ENCODE measurements at regions of chr3 and their contacts with region 1.

Region 1: GRCh38 chr3:156382458-156383346 is 172.2 kb downstream of the SSR3 start:
- DNase-seq: peak; percentile 49
- H3K4me3 ChIP-seq: no peak overlapping the region
- H3K27ac ChIP-seq: no peak overlapping the region
- H3K4me1 ChIP-seq: no peaks in the 10 kb centered on the region
- H3K27me3 ChIP-seq: no peaks in the 10 kb centered on the region
- CTCF ChIP-seq: peak; percentile 76 to 84
- POLR2A ChIP-seq: no peak

Region 2: GRCh38 chr3:156181323-156181908 is 201.3 kb before region 1 on chr3:
- CTCF ChIA-PET with region 1: interaction called, 424 read pairs
- POLR2A ChIA-PET with region 1: no interaction called
- dilution Hi-C with region 1: no loop called
- intact Hi-C with region 1: no loop called
- DNase-seq: no peak
- H3K4me3 ChIP-seq: no peak overlapping the region
- H3K27ac ChIP-seq: no peak overlapping the region
- H3K4me1 ChIP-seq: no peaks in the 10 kb centered on the region
- H3K27me3 ChIP-seq: no peaks in the 10 kb centered on the region
- CTCF ChIP-seq: no peak
- POLR2A ChIP-seq: no peak

Region 3: DNA sequence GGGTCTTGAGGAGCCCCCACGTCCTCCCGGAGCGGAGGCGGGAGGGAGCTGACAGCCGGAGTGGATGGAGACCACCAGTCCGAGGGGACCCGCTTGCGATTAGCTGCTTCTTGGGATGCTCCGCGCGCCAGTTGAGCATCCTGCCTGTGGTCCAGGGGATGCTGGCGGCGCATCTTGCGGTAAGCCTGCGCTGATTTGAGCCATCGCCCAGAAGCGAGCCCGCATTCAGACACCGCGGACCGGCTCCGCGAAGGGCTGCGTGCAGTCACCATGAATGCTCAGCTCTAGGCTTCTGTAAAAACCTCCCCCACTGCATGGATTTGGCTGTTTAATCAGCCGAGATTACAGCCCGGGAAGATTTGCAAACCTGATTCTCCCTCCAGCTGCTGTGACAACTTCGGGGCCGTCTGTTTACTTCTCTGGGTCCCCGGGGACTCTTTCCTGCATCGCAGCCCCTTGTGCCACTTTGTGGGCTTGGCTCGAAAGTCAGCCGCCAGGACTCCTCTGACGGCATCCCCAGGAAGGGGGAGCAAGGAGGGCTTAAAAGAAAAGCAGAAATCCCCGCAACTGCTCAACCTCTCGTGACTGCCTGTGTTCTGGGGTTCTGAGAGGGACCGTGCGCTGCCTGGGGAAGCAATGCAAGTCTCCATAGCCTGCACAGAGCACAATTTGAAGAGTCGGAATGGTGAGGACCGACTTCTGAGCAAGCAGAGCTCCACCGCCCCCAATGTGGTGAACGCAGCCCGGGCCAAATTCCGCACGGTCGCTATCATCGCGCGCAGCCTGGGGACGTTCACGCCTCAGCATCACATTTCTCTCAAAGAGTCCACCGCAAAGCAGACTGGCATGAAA is 91.2 kb before region 1 on chr3:
- CTCF ChIA-PET with region 1: interaction called, 11 read pairs
- POLR2A ChIA-PET with region 1: no interaction called
- dilution Hi-C with region 1: no loop called
- intact Hi-C with region 1: no loop called
- DNase-seq: no peak
- H3K4me3 ChIP-seq: peak overlapping the region; percentile 12 to 21 (median 14)
- H3K27ac ChIP-seq: no peak overlapping the region
- H3K4me1 ChIP-seq: peaks cover 6% of the 10 kb centered on the region
- H3K27me3 ChIP-seq: peaks cover 8 to 16% of the 10 kb centered on the region in 2 experiments
- CTCF ChIP-seq: no peak
- POLR2A ChIP-seq: no peak

Region 4: DNA sequence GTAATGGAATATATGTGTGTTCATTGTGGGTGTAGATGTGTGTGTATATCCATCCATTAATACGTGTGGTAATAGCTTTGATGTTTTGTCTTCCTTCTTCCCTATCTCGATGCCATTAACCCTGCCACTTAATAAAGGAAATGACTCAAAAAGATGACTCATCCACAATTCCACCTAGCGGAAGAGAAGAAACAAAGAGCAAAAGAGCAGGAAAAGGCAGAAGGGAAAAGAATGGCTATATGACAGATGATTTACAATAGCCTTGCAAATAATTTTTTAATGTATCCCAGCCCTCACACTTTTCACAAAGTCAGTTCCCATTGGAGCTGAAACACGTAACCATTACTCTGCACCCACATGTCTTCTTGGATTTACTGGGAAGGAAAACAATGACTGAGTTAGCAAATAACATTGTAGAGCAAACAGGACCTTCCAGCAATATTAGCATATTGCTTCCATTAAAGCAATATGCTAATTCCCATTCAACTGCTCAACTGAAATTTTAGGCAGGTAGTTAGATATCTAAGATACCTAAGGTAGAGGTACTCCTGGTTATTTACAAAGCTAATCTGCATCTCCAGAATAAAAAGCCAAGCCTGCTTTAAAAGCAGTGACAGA is 65.1 kb before region 1 on chr3:
- CTCF ChIA-PET with region 1: interaction called, 18 read pairs
- POLR2A ChIA-PET with region 1: no interaction called
- dilution Hi-C with region 1: no loop called
- intact Hi-C with region 1: no loop called
- DNase-seq: peak; percentile 96
- H3K4me3 ChIP-seq: no peak overlapping the region
- H3K27ac ChIP-seq: peak overlapping the region; percentile 72
- H3K4me1 ChIP-seq: peaks cover 24% of the 10 kb centered on the region
- H3K27me3 ChIP-seq: no peaks in the 10 kb centered on the region
- CTCF ChIP-seq: no peak
- POLR2A ChIP-seq: no peak

Region 5: DNA sequence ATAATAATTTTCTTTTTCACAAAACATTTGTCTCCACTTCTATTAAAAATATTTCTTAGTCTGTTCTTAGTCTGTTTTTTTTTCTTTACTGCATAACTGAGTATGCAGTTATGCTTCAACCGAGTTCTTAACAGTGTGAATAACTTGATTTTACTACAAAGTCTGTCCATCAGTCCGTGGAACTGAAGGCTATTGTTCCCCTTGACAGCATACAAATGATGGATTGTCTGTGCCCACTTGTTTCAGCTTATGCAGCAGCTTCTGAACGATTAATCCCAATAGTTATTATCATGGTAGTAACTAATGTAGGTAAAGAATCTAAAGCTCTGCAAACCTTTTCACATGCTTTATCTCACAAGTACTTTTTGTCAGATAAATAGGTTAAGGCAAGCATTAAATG is 21.5 kb after region 1 on chr3:
- CTCF ChIA-PET with region 1: interaction called, 12 read pairs
- POLR2A ChIA-PET with region 1: no interaction called
- dilution Hi-C with region 1: no loop called
- intact Hi-C with region 1: no loop called
- DNase-seq: peak; percentile 4
- H3K4me3 ChIP-seq: no peak overlapping the region
- H3K27ac ChIP-seq: no peak overlapping the region
- H3K4me1 ChIP-seq: no peaks in the 10 kb centered on the region
- H3K27me3 ChIP-seq: no peaks in the 10 kb centered on the region
- CTCF ChIP-seq: no peak
- POLR2A ChIP-seq: no peak

Region 6: DNA sequence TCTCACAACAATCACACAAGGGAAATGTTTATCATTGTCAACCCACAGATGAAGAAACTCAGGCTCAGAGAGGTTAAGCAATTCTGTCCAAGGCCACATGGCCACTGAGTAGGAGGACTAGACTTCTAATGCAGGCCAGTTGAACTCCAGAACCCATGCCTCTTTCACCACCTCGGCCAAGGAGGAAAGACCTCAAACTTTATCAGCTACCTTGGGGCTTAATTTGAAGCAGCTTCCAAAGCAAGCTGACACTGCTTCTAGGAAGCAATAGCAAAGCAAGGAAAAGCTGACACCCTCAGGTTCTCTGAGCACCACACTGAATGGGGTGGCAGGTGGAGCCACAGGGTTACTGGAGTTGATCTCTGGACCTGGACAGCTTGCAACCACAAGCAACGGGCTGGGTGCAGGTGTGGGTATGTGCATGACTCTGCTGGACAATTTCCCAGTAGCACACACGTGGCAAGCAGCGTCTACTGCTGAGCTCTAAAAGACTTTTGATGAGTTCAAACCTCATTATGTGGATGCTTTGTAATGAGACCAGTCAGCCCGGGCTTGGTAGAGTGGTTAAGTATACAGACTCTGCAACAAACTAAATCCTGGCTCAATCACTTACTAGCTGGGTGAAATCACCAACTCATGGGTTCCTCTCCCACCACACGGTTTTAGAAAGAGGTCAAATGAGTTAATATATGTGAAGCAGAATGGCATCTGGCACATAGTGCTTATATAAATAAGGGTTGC is 754.1 kb after region 1 on chr3:
- CTCF ChIA-PET with region 1: interaction called, 9 read pairs
- POLR2A ChIA-PET with region 1: no interaction called
- dilution Hi-C with region 1: no loop called
- intact Hi-C with region 1: loop called (anchors 5 kb)
- DNase-seq: no peak
- H3K4me3 ChIP-seq: no peak overlapping the region
- H3K27ac ChIP-seq: no peak overlapping the region
- H3K4me1 ChIP-seq: peaks cover 6% of the 10 kb centered on the region
- H3K27me3 ChIP-seq: no peaks in the 10 kb centered on the region
- CTCF ChIP-seq: no peak
- POLR2A ChIP-seq: no peak